Dendritic cell treated with granulocyte-macrophage colony-stimulating factor and Interleukin-4, amounts not matched to agents 40 ng/mL and 50 ng/mL, for 4 days (primary cell): ENCODE measurements at regions of chr17 and their contacts with region 1.

Region 1: DNA sequence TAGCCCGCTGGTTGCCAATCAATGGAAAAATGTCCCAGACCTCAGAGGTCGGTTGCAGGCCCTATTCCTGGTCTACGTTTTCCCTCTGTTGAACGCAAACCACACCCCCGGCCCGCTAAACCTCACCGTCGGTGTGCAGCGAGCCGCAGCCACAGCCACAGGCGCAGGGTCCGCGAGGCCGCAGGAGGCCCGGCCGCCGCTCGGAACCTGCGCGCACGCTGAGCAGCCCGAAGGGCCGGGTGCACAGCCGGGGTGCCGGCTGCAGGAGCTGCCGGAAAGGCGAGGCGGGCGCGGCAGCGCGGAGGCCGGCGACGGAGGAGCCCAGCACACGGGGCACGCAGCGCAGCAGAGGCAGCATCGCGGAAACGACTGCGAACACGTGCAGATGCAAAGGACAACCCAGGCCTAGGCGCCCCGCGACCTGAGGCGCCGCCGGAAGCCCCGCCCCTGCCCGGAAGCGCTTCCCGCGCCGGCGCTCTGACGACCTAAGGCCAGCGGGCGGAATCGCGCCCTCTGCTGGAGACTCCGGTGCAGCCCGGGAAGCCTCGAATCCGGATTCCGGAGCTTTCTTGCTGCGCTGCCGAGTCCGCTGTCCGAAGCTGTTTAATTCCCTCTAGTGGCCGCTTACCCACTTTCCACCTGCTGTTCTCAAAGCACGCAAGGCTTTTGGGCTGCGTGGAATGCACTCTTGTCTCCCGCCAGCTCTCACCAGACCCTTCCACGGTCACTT is at the start of gene C1QBP:
- H3K4me3 Mint-ChIP-seq: peak within 1 kb of the TSS; percentile 79
- H3K27ac Mint-ChIP-seq: peak within 1 kb of the TSS; percentile 87
- H3K4me1 Mint-ChIP-seq: peaks cover 35% of the 10 kb centered on the region
- H3K27me3 Mint-ChIP-seq: no peaks in the 10 kb centered on the region

Region 2: GRCh38 chr17:5381542-5381941 is 57.3 kb before region 1 on chr17:
- intact Hi-C with region 1: no loop called
- H3K4me3 Mint-ChIP-seq: no peak overlapping the region
- H3K27ac Mint-ChIP-seq: no peak overlapping the region
- H3K4me1 Mint-ChIP-seq: no peaks in the 10 kb centered on the region
- H3K27me3 Mint-ChIP-seq: no peaks in the 10 kb centered on the region

Region 3: GRCh38 chr17:5419356-5419958 is 19.4 kb before region 1 on chr17 and contains the start of gene NUP88:
- intact Hi-C with region 1: loop called (anchors 1 kb)
- H3K4me3 Mint-ChIP-seq: peak within 1 kb of the TSS; percentile 100
- H3K27ac Mint-ChIP-seq: peak within 1 kb of the TSS; percentile 93
- H3K4me1 Mint-ChIP-seq: peaks cover 11% of the 10 kb centered on the region
- H3K27me3 Mint-ChIP-seq: no peaks in the 10 kb centered on the region

Region 4: GRCh38 chr17:5468075-5468473 is 29.2 kb after region 1 on chr17:
- intact Hi-C with region 1: loop called (anchors 2 kb)
- H3K4me3 Mint-ChIP-seq: peak overlapping the region; percentile 77
- H3K27ac Mint-ChIP-seq: peak overlapping the region; percentile 65
- H3K4me1 Mint-ChIP-seq: peaks cover 39% of the 10 kb centered on the region
- H3K27me3 Mint-ChIP-seq: no peaks in the 10 kb centered on the region

Region 5: DNA sequence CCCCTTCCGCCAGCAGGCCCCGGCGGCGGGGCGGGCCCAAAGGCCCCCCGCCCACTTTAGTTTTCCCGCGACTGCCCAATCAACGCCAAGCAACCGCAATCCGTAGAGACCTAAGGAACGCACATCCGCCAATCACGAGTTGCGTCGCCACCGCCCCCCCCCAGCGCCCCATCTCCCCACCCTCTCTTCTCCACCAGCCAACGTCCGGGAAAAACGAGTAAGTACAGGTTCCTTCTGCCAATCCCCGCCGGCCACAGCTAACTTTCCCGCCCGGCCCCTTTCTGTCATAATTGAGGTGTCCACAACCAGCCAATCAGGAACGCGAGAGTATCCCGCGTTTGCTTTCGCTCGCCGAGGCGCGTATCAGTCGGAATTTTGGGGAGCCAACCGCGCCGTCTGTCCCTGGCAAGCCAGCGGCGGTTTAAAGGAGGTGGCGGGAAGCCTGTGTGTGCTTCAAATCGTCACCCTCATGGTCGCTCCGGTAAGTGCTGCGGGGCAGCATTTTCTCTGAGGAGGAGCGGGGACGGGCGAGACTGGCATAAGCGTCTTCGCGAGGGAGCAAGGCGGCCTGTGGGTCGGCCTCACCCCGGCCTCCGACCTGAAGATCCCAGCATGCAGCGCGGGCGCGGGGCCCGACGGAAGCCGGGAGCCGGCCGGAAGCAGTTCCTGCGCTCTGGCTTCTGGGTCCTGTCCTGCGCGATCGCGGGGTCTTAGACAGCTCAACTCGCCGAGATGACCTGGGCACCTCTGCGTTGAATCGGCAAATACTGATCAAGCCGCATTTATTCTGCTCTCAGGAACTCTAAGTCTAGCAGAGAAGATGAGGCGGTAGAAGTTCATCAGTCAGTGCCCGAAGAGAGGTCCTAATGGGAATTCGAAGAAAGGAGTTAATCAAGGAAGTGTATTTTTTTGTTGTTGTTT is 47.6 kb after region 1 on chr17 and contains the start of gene MIS12:
- intact Hi-C with region 1: loop called (anchors 2 kb)
- H3K4me3 Mint-ChIP-seq: peak within 1 kb of the TSS; percentile 96
- H3K27ac Mint-ChIP-seq: peak within 1 kb of the TSS; percentile 99
- H3K4me1 Mint-ChIP-seq: peaks cover 35% of the 10 kb centered on the region
- H3K27me3 Mint-ChIP-seq: no peaks in the 10 kb centered on the region

Region 6: GRCh38 chr17:5619088-5619740 is 180.3 kb after region 1 on chr17:
- intact Hi-C with region 1: no loop called
- H3K4me3 Mint-ChIP-seq: no peak overlapping the region
- H3K27ac Mint-ChIP-seq: no peak overlapping the region
- H3K4me1 Mint-ChIP-seq: peaks cover 15% of the 10 kb centered on the region
- H3K27me3 Mint-ChIP-seq: peaks cover 38% of the 10 kb centered on the region